ENCODE measurements at regions of chr3 and their contacts with region 1.

Region 1: DNA sequence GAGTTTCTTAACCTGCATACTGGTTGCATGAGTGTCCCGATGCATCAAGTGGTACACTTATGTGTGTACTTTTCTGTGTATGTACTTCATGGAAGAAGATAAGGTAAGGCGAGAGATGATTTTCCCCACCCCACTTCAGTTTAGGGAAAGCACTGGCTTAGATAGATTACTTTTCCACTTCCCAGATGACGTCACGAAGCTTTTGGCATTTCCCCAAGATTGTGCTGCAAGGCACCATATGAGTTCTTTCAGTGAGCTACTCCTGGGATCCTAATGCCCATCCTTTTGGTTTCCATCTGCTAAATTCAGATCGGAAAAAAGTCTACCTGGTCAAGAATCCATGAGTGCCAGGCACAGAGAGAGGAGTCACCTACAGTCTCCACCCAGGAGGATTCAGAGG is 4.5 kb downstream of the IL17RB start:
- DNase-seq: peak in 1 of 5 donors; percentile 20
- ATAC-seq: no peak
- H3K4me3 ChIP-seq: no peak overlapping the region
- H3K27ac ChIP-seq: no peak overlapping the region
- H3K4me1 ChIP-seq: peaks cover 0 to 10% (median 5%) of the 10 kb centered on the region in 12 donors
- H3K27me3 ChIP-seq: peaks cover 0 to 22% (median 1%) of the 10 kb centered on the region in 9 donors
- CTCF ChIP-seq: no peak
- POLR2A ChIP-seq: no peak

Region 2: DNA sequence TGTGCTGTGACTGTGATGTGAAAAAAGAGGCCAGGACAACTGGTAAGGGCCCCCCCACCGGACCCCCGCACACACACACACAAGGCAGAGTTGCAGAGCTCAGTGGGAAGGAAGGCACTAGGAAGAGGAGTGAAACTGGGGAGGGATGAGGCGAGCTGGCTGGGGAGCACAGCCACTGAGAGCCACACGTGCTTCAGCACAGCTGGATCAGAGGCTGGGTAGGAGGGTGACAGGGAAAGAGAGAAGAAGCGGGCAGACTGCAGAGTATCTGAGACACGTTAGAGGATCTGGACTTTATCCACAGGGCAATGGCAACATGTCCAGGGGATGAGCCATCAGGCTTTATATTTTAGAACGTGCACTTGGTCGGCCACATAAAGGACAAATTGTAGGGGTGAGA is 557.0 kb before region 1 on chr3:
- intact Hi-C with region 1: loop called in 1 of 10 experiments (anchors 10 kb)
- DNase-seq: no peak
- ATAC-seq: peak in 3 of 4 donors; percentile 61 to 75 (median 66)
- H3K4me3 ChIP-seq: no peak overlapping the region
- H3K27ac ChIP-seq: no peak overlapping the region
- H3K4me1 ChIP-seq: peaks cover 0 to 22% (median 0%) of the 10 kb centered on the region in 12 donors
- H3K27me3 ChIP-seq: no peaks in the 10 kb centered on the region
- CTCF ChIP-seq: no peak
- POLR2A ChIP-seq: no peak

Region 3: GRCh38 chr3:53821631-53822121 is 29.2 kb before region 1 on chr3:
- intact Hi-C with region 1: loop called in 1 of 10 experiments (anchors 1 kb)
- DNase-seq: peak in 1 of 5 donors; percentile 51
- ATAC-seq: peak in 3 of 4 donors; percentile 32 to 69 (median 47)
- H3K4me3 ChIP-seq: no peak overlapping the region
- H3K27ac ChIP-seq: no peak overlapping the region
- H3K4me1 ChIP-seq: no peaks in the 10 kb centered on the region
- H3K27me3 ChIP-seq: no peaks in the 10 kb centered on the region
- CTCF ChIP-seq: no peak
- POLR2A ChIP-seq: no peak

Measured in heart left ventricle (tissue), 16 donors.